HCT116 (cell line): ENCODE measurements at regions of chr1 and their contacts with region 1.

Region 1: DNA sequence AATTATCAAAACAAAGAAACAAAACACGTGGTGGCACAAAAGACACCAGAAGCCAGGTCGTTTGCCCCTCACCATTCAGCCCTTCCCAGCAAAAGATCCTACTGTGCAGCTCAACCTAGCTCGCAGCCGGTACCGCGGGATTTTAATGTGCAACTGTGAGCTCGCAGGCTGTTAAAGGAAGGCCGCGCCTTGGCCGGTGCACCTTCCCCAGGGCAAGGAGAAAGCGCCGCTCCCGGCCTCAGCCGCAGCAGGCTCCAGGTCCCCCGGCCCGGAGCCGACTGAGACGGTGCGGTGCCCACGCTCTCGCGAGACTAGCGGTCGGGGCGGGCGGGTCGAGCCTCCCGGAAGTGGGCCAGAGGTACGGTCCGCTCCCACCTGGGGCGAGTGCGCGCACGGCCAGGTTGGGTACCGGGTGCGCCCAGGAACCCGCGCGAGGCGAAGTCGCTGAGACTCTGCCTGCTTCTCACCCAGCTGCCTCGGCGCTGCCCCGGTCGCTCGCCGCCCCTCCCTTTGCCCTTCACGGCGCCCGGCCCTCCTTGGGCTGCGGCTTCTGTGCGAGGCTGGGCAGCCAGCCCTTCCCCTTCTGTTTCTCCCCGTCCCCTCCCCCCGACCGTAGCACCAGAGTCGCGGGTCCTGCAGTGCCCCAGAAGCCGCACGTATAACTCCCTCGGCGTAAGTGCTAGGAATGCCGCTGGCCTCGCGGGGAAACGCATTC is at the start of gene AGL:
- DNase-seq: peak; percentile 58
- ATAC-seq: peak; percentile 97
- H3K4me3 ChIP-seq: peak within 1 kb of the TSS; percentile 84
- H3K27ac ChIP-seq: peak within 1 kb of the TSS; percentile 64
- H3K4me1 ChIP-seq: peaks cover 9 to 16% of the 10 kb centered on the region in 2 experiments
- H3K27me3 ChIP-seq: no peaks in the 10 kb centered on the region
- CTCF ChIP-seq: no peak
- POLR2A ChIP-seq: peak; percentile 97
- RAD21 ChIP-seq: no peak
- total RNA-seq, gene AGL: 19.4 TPM

Region 2: DNA sequence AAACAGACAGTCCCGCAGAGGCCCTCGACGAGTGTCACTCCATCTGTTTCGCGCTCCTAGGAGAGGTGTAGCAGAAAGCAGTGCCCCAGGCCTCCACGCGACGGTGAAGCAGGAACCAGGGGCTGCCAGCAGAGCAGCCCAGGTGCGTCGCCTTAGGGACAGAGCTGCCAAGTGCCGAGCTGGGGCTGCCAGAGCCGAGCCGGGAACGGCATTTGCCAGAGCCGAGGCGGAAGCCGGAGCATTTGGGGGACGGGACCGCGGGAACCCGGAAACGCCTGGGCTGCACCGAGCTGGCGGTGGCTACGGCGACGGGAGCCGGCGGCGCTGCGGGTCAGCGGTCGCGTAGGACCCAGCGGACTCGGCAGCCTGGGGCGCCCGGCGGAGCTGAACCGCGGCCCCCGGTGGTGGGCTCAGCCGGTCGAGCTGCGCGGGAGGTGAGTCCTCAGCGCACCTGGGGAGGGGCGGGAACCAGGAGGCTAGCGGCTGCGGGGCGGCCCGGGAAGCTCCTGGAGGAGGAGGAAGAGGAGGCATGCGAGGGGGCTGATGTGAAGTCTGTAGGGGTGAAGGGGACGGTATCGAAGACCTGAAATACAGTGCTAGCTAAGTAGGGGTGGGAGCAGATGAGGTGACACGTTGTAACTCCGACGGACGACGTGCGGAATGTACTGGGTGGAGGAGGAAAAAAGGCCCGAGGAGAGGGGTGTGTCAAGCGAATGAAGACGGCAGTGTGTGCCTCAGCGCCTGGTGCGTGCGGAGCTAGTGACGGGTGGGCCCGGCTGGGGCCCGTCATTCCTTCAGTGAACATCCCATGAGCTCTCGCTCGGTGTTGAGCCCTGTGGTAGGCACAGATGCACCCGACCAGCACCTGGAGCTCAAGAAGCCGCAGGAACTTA is 120.1 kb after region 1 on chr1 and contains the start of gene SLC35A3:
- CTCF ChIA-PET with region 1: no interaction called
- POLR2A ChIA-PET with region 1: no interaction called
- RAD21 ChIA-PET with region 1: no interaction called
- intact Hi-C with region 1: loop called (anchors 5 kb)
- DNase-seq: peak; percentile 62
- ATAC-seq: peak; percentile 91
- H3K4me3 ChIP-seq: peak within 1 kb of the TSS; percentile 59 to 65
- H3K27ac ChIP-seq: peak within 1 kb of the TSS; percentile 74
- H3K4me1 ChIP-seq: peaks cover 10 to 28% of the 10 kb centered on the region in 2 experiments
- H3K27me3 ChIP-seq: no peaks in the 10 kb centered on the region
- CTCF ChIP-seq: no peak
- POLR2A ChIP-seq: peak; percentile 78
- RAD21 ChIP-seq: 0 out of 2 replicates have a peak, but pooled peaks have one; percentile 10
- total RNA-seq, gene SLC35A3: 21.6 TPM